GM12878 (cell line): ENCODE measurements at regions of chr4 and their contacts with region 1.

Region 1: GRCh38 chr4:40486534-40486933 is 143.1 kb downstream of the RBM47 start:
- DNase-seq: no peak
- ATAC-seq: no peak
- H3K4me3 ChIP-seq: no peak overlapping the region
- H3K27ac ChIP-seq: no peak overlapping the region
- H3K4me1 ChIP-seq: no peaks in the 10 kb centered on the region; the same call in 1 of the 2 replicates
- H3K27me3 ChIP-seq: no peaks in the 10 kb centered on the region
- CTCF ChIP-seq: no peak
- EP300 ChIP-seq: no peak
- POLR2A ChIP-seq: no peak
- RAD21 ChIP-seq: no peak

Region 2: GRCh38 chr4:40502934-40503333 is 16.4 kb after region 1 on chr4:
- CTCF ChIA-PET with region 1: interaction called, 7 read pairs
- POLR2A ChIA-PET with region 1: interaction called, 4 read pairs
- RAD21 ChIA-PET with region 1: no interaction called
- SMC1A ChIA-PET with region 1: interaction called, 12 read pairs
- in situ Hi-C with region 1: no loop called
- intact Hi-C with region 1: no loop called
- DNase-seq: no peak
- ATAC-seq: peak; percentile 68
- H3K4me3 ChIP-seq: peak overlapping the region; percentile 18; the same call in 1 of the 2 replicates
- H3K27ac ChIP-seq: peak overlapping the region; percentile 57
- H3K4me1 ChIP-seq: peaks cover 21% of the 10 kb centered on the region
- H3K27me3 ChIP-seq: no peaks in the 10 kb centered on the region
- CTCF ChIP-seq: no peak
- EP300 ChIP-seq: no peak
- POLR2A ChIP-seq: no peak
- RAD21 ChIP-seq: no peak